GM12878 (cell line): ENCODE measurements at regions of chr1 and their contacts with region 1.

Region 1: GRCh38 chr1:206766251-206766856 is 4.2 kb upstream of the IL19 start:
- DNase-seq: peak; percentile 82
- ATAC-seq: peak; percentile 72
- H3K4me3 ChIP-seq: no peak overlapping the region
- H3K27ac ChIP-seq: peak overlapping the region; percentile 28
- H3K4me1 ChIP-seq: peaks cover 48% of the 10 kb centered on the region
- H3K27me3 ChIP-seq: no peaks in the 10 kb centered on the region
- CTCF ChIP-seq: no peak
- EP300 ChIP-seq: peak; percentile 45 to 55; a peak in 2 of 4 replicates
- POLR2A ChIP-seq: no peak
- RAD21 ChIP-seq: no peak

Region 2: GRCh38 chr1:206716870-206717673 is 49.3 kb before region 1 on chr1:
- CTCF ChIA-PET with region 1: interaction called, 4 read pairs
- POLR2A ChIA-PET with region 1: interaction called, 6 read pairs
- RAD21 ChIA-PET with region 1: interaction called, 5 read pairs
- SMC1A ChIA-PET with region 1: interaction called, 10 read pairs
- in situ Hi-C with region 1: no loop called
- intact Hi-C with region 1: no loop called
- DNase-seq: peak; percentile 88
- ATAC-seq: peak; percentile 78
- H3K4me3 ChIP-seq: 0 out of 2 replicates have a peak overlapping the region, but pooled peaks have one; percentile 19
- H3K27ac ChIP-seq: peak overlapping the region; percentile 73
- H3K4me1 ChIP-seq: peaks cover 74% of the 10 kb centered on the region
- H3K27me3 ChIP-seq: no peaks in the 10 kb centered on the region
- CTCF ChIP-seq: no peak
- EP300 ChIP-seq: peak in 1 of 2 experiments; percentile 34; a peak in 1 of 4 replicates
- POLR2A ChIP-seq: no peak
- RAD21 ChIP-seq: no peak

Region 3: DNA sequence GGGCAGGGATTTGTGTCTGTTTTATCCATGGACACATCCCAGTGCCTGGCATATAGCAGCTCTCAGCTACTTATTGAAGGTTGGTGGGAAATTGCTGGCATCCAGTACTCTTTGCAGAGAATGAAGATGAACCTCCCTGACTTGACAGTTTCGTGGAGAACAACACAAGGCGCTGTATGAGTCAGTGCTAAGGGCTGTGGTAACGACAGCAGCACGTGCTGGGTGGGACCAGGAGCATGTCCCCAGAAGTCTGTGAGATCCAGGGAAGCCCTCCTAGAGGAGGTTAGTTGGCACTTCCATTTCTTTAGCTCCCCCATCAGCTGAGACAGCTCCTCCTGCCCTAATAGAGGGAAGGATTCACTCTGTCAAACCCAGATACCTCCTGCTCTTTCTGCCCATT is 21.7 kb before region 1 on chr1:
- CTCF ChIA-PET with region 1: interaction called, 91 read pairs
- POLR2A ChIA-PET with region 1: interaction called, 52 read pairs
- RAD21 ChIA-PET with region 1: interaction called, 227 read pairs
- SMC1A ChIA-PET with region 1: interaction called, 264 read pairs
- in situ Hi-C with region 1: loop called (anchors 5 kb)
- intact Hi-C with region 1: loop called (anchors 1 kb)
- DNase-seq: no peak
- ATAC-seq: peak; percentile 22
- H3K4me3 ChIP-seq: no peak overlapping the region
- H3K27ac ChIP-seq: no peak overlapping the region
- H3K4me1 ChIP-seq: peaks cover 51% of the 10 kb centered on the region
- H3K27me3 ChIP-seq: no peaks in the 10 kb centered on the region
- CTCF ChIP-seq: no peak
- EP300 ChIP-seq: no peak
- POLR2A ChIP-seq: no peak
- RAD21 ChIP-seq: no peak

Region 4: GRCh38 chr1:206797534-206798383 is 31.4 kb after region 1 on chr1:
- CTCF ChIA-PET with region 1: interaction called, 299 read pairs
- POLR2A ChIA-PET with region 1: interaction called, 283 read pairs
- RAD21 ChIA-PET with region 1: interaction called, 363 read pairs
- SMC1A ChIA-PET with region 1: interaction called, 319 read pairs
- in situ Hi-C with region 1: no loop called
- intact Hi-C with region 1: no loop called
- DNase-seq: no peak
- ATAC-seq: peak; percentile 31; the same call in 2 of the 3 replicates
- H3K4me3 ChIP-seq: no peak overlapping the region
- H3K27ac ChIP-seq: no peak overlapping the region
- H3K4me1 ChIP-seq: peaks cover 28% of the 10 kb centered on the region
- H3K27me3 ChIP-seq: no peaks in the 10 kb centered on the region
- CTCF ChIP-seq: peak; percentile 44 to 78 (median 73)
- EP300 ChIP-seq: no peak
- POLR2A ChIP-seq: no peak
- RAD21 ChIP-seq: peak; percentile 41

Region 5: GRCh38 chr1:206925106-206925736 is 158.9 kb after region 1 on chr1:
- CTCF ChIA-PET with region 1: interaction called, 6 read pairs
- POLR2A ChIA-PET with region 1: interaction called, 7 read pairs
- RAD21 ChIA-PET with region 1: interaction called, 29 read pairs
- SMC1A ChIA-PET with region 1: interaction called, 16 read pairs
- in situ Hi-C with region 1: no loop called
- intact Hi-C with region 1: no loop called
- DNase-seq: peak; percentile 91
- ATAC-seq: peak; percentile 72
- H3K4me3 ChIP-seq: no peak overlapping the region; the same call in 1 of the 2 replicates
- H3K27ac ChIP-seq: peak overlapping the region; percentile 99
- H3K4me1 ChIP-seq: peaks cover 51% of the 10 kb centered on the region
- H3K27me3 ChIP-seq: no peaks in the 10 kb centered on the region
- CTCF ChIP-seq: peak in 1 of 3 experiments; percentile 29; a peak in 1 of 6 replicates
- EP300 ChIP-seq: no peak; a peak in 1 of 4 replicates
- POLR2A ChIP-seq: no peak
- RAD21 ChIP-seq: peak; percentile 56

Region 6: DNA sequence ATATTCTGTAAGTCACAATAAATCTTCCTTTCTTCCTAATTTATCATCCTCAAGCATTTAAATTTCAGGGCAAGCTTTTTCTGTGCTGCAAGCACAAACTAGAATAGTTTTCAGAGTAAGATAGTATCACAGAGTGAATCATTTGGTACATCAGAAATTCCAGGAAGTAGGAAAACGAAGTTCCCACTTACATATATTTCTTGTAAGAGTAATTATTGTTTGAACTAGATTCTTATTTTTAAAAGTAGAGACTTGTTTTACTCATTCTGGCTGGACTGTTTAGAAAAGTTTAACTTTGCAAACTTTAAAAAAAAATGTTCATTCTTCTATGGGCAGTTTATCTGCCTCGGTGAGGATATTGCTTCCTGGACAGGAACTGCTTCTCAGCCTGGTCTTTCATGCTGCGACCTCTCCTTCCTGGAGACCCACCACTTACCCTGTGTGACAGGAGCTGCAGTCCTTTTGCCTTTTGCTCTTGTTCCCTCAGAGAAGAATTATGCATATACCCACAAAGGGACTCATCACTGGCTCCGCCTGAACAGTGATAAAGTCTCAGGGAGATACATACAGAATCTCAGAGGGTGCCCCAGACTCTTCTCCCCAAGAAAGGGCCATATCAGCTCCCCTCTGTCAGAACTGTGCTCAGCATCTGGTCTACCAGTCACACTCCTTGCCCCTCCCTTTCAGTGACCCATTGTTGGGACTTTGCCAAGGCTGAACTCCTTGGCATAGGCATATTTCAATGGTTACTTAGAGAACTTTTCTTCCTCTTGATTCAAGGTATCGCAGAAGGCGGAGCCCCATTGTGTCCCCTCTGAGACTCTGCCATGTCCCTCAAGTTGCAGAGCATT is 452.4 kb after region 1 on chr1:
- CTCF ChIA-PET with region 1: no interaction called
- POLR2A ChIA-PET with region 1: no interaction called
- RAD21 ChIA-PET with region 1: no interaction called
- SMC1A ChIA-PET with region 1: no interaction called
- in situ Hi-C with region 1: no loop called
- intact Hi-C with region 1: no loop called
- DNase-seq: no peak
- ATAC-seq: no peak
- H3K4me3 ChIP-seq: no peak overlapping the region
- H3K27ac ChIP-seq: no peak overlapping the region
- H3K4me1 ChIP-seq: peaks cover 13% of the 10 kb centered on the region
- H3K27me3 ChIP-seq: no peaks in the 10 kb centered on the region
- CTCF ChIP-seq: no peak
- EP300 ChIP-seq: no peak
- POLR2A ChIP-seq: no peak
- RAD21 ChIP-seq: no peak